Sciatic nerve (tissue), 2 donors: ENCODE measurements at regions of chr1 and their contacts with region 1.

Region 1: GRCh38 chr1:163315773-163316374 is 5.9 kb upstream of the NUF2 start:
- DNase-seq: peak; percentile 61
- ATAC-seq: no peak

Region 2: GRCh38 chr1:162357681-162358266 is 958.1 kb before region 1 on chr1:
- intact Hi-C with region 1: no loop called
- DNase-seq: no peak
- ATAC-seq: no peak

Region 3: DNA sequence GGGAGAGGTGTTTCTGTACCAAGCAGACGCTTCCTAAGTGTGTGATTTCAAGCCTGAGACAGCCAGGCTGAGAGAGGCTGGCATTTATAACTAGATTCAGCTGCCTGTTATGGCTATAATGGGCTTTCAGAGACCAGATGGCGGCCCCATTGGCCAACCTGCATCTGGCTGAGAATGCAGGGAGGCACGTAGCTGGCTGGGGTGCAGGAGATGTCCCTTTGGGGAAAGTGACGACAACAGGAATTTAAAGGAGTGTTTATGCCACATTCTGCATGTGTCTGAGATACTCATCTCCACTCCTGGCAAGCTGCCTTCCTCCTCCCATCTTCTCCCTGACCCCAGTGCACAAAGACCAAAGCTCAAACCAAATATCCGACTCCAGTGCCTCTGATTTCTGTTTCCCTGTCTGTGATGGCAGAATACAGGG is 433.6 kb before region 1 on chr1:
- intact Hi-C with region 1: loop called (anchors 10 kb)
- DNase-seq: no peak
- ATAC-seq: no peak